IMR-90 (cell line): ENCODE measurements at regions of chr10 and their contacts with region 1.

Region 1: DNA sequence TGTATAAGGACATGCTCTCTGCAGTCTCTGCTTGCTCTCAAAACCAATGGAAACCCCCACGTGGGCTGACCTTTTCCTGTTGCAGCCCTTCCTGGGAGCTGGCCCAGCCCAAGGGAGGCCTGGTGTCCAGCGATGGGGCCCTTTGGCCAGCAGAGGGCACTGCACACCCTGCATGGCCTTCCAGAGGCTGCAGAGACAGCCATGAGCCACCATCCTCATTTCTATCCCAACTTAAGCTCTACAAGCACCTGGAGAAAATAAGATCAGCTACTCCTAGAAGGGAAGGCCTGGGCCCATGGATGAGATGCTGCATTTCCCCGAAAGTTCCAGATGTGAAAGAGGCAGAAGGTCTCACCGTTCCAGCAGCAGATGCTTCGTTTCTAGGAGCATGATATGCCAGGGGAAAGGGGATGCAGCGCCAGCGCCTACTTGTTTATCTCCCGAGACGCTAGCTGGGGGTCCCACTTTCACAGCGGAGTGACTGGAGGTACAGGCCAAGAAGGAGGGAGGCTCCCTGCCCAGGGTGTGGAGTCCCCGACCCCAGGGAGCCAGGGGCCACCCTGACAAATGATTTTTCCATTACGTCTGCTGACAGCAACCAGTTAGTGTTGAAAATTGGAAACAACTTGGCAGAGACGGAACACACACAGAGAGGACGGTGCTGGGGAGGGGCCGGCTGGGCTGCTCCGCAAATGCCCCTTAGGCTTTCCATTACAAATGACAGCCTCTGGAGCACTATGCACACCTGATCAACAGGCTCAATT is 106.4 kb downstream of the ZRANB1 start:
- DNase-seq: peak; percentile 87
- ATAC-seq: peak; percentile 97
- H3K4me3 ChIP-seq: no peak overlapping the region
- H3K27ac ChIP-seq: no peak overlapping the region
- H3K4me1 ChIP-seq: peaks cover 23% of the 10 kb centered on the region
- H3K27me3 ChIP-seq: no peaks in the 10 kb centered on the region
- CTCF ChIP-seq: peak; percentile 98
- POLR2A ChIP-seq: peak; percentile 51
- RAD21 ChIP-seq: peak; percentile 98

Region 2: GRCh38 chr10:125000366-125001312 is 47.6 kb before region 1 on chr10:
- CTCF ChIA-PET with region 1: interaction called, 13 read pairs
- POLR2A ChIA-PET with region 1: no interaction called
- dilution Hi-C with region 1: no loop called
- in situ Hi-C with region 1: no loop called
- intact Hi-C with region 1: no loop called
- DNase-seq: peak; percentile 57
- ATAC-seq: peak; percentile 11; the same call in 1 of the 2 replicates
- H3K4me3 ChIP-seq: no peak overlapping the region
- H3K27ac ChIP-seq: peak overlapping the region; percentile 59; the same call in 1 of the 2 replicates
- H3K4me1 ChIP-seq: peaks cover 32% of the 10 kb centered on the region
- H3K27me3 ChIP-seq: no peaks in the 10 kb centered on the region
- CTCF ChIP-seq: peak; percentile 36
- POLR2A ChIP-seq: no peak
- RAD21 ChIP-seq: peak; percentile 48; the same call in 1 of the 2 replicates

Region 3: GRCh38 chr10:125144693-125145623 is 96.7 kb after region 1 on chr10:
- CTCF ChIA-PET with region 1: interaction called, 3 read pairs
- POLR2A ChIA-PET with region 1: no interaction called
- dilution Hi-C with region 1: no loop called
- in situ Hi-C with region 1: loop called (anchors 10 kb)
- intact Hi-C with region 1: loop called (anchors 5 kb)
- DNase-seq: peak; percentile 57
- ATAC-seq: peak; percentile 57
- H3K4me3 ChIP-seq: no peak overlapping the region
- H3K27ac ChIP-seq: no peak overlapping the region
- H3K4me1 ChIP-seq: peaks cover 38% of the 10 kb centered on the region
- H3K27me3 ChIP-seq: no peaks in the 10 kb centered on the region
- CTCF ChIP-seq: peak; percentile 52
- POLR2A ChIP-seq: no peak
- RAD21 ChIP-seq: peak; percentile 54

Region 4: GRCh38 chr10:125343118-125343925 is 295.0 kb after region 1 on chr10:
- CTCF ChIA-PET with region 1: no interaction called
- POLR2A ChIA-PET with region 1: no interaction called
- dilution Hi-C with region 1: no loop called
- in situ Hi-C with region 1: no loop called
- intact Hi-C with region 1: loop called (anchors 1 kb)
- DNase-seq: peak; percentile 36
- ATAC-seq: peak; percentile 79
- H3K4me3 ChIP-seq: no peak overlapping the region
- H3K27ac ChIP-seq: no peak overlapping the region
- H3K4me1 ChIP-seq: peaks cover 3% of the 10 kb centered on the region; the same call in 1 of the 2 replicates
- H3K27me3 ChIP-seq: peaks cover 2% of the 10 kb centered on the region
- CTCF ChIP-seq: peak; percentile 54
- POLR2A ChIP-seq: no peak
- RAD21 ChIP-seq: peak; percentile 60

Region 5: DNA sequence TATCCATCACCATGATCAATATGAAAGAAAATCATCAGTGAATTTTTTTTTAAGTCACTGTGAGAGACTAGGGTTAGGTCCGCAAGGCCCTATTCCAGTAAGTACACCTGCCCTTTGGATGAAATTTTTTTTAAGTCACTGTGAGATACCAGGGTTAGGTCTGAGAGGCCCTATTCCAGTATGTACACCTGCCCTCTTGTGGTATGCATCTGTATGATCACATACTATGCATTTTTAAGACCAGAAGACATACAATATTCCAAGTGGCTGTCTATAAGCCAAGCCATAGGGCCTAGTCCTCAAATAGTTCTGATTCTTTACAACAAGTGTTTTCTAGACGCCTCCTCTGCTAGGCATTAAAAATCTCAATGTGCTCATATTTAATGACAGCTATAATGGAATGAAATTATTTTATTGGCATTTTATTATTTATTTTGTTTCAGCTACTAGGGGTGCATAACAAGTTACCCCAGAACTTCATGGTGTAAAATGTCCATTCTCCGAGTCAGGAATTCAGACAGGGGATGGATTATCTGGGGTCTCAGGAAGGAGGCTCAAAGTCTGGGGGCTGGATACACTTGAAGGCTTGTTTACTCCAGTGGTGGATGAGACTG is 581.6 kb after region 1 on chr10:
- CTCF ChIA-PET with region 1: no interaction called
- POLR2A ChIA-PET with region 1: no interaction called
- dilution Hi-C with region 1: no loop called
- in situ Hi-C with region 1: no loop called
- intact Hi-C with region 1: loop called (anchors 10 kb)
- DNase-seq: peak; percentile 53
- ATAC-seq: peak; percentile 65; the same call in 1 of the 2 replicates
- H3K4me3 ChIP-seq: no peak overlapping the region
- H3K27ac ChIP-seq: no peak overlapping the region
- H3K4me1 ChIP-seq: no peaks in the 10 kb centered on the region
- H3K27me3 ChIP-seq: peaks cover 4% of the 10 kb centered on the region
- CTCF ChIP-seq: peak; percentile 41
- POLR2A ChIP-seq: no peak
- RAD21 ChIP-seq: peak; percentile 51

Region 6: DNA sequence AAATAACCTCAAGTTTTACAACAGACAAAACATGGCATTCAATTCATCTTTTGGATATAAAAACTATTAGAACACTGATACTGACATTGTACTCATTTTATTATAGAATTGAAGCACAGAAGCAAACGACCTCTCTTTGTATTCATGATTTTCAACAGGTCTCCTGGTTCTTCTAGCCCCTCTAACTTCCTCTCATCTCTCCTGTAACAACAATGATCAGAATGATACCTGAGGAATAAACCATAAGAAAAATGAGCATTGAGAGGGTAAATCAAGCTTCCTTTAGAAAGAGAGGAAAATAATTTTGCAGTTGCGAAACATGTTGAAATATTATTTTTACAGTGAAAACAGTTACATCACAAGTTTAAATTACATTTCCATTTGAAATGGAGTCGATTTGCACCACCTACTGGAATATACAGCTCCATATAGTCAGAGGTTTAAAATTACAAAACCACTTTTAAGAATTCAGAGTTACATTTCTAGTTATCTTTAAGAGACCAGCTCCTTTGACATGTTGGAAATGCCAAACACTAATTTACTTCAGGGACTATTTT is 652.1 kb after region 1 on chr10:
- CTCF ChIA-PET with region 1: no interaction called
- POLR2A ChIA-PET with region 1: no interaction called
- dilution Hi-C with region 1: no loop called
- in situ Hi-C with region 1: loop called (anchors 10 kb)
- intact Hi-C with region 1: loop called (anchors 5 kb)
- DNase-seq: peak; percentile 53
- ATAC-seq: peak; percentile 70
- H3K4me3 ChIP-seq: no peak overlapping the region
- H3K27ac ChIP-seq: no peak overlapping the region
- H3K4me1 ChIP-seq: no peaks in the 10 kb centered on the region; the same call in 1 of the 2 replicates
- H3K27me3 ChIP-seq: peaks cover 4% of the 10 kb centered on the region; the same call in 1 of the 2 replicates
- CTCF ChIP-seq: peak; percentile 43
- POLR2A ChIP-seq: no peak
- RAD21 ChIP-seq: peak; percentile 48